Activated CD8-positive, alpha-beta T cell treated with anti-CD3 and anti-CD28 coated beads for 36 hours (primary cell): ENCODE measurements at regions of chr4 and their contacts with region 1.

Region 1: DNA sequence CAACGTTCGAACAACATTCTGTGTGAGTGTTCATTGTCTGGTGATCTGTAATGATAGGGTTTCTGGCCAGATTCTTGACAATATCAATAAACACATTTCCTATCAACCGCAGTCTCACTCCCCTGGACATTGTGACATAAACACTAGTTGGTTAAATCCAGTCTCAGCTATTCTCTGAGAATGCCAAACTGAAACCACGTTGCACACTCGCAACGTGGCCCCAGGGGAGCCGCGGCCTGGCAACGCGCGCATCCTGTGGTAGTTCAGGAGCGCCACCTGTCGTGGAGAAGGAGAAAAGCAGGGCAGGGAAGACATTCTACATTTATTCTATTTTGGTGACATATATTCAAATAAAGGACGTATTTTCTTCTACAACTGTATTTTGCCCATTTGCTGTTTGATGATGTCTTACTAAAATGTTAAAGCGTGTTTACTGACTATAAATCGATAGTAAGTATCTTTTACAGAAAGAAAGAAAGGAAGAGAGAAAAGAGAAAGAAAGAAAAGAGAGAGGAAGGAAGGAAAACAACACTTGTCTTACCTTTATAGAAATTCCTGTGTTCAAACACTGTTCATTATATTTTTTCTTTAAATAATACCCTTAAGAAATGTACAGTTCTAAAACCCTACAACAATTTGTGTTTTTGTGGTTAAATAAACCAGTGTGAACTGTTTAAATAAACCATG is 738.3 kb upstream of the FRG1 start:
- DNase-seq: peak; percentile 38
- ATAC-seq: peak; percentile 47
- H3K4me3 Mint-ChIP-seq: no peak overlapping the region
- H3K27ac Mint-ChIP-seq: no peak overlapping the region
- H3K4me1 Mint-ChIP-seq: peaks cover 4% of the 10 kb centered on the region
- H3K27me3 Mint-ChIP-seq: no peaks in the 10 kb centered on the region
- CTCF ChIP-seq: peak; percentile 82

Region 2: GRCh38 chr4:187606581-187606980 is 1595.7 kb before region 1 on chr4:
- CTCF ChIA-PET with region 1: no interaction called
- POLR2A ChIA-PET with region 1: no interaction called
- intact Hi-C with region 1: loop called (anchors 5 kb)
- DNase-seq: peak; percentile 15
- ATAC-seq: no peak
- H3K4me3 Mint-ChIP-seq: no peak overlapping the region
- H3K27ac Mint-ChIP-seq: no peak overlapping the region
- H3K4me1 Mint-ChIP-seq: no peaks in the 10 kb centered on the region
- H3K27me3 Mint-ChIP-seq: no peaks in the 10 kb centered on the region
- CTCF ChIP-seq: peak; percentile 79

Region 3: DNA sequence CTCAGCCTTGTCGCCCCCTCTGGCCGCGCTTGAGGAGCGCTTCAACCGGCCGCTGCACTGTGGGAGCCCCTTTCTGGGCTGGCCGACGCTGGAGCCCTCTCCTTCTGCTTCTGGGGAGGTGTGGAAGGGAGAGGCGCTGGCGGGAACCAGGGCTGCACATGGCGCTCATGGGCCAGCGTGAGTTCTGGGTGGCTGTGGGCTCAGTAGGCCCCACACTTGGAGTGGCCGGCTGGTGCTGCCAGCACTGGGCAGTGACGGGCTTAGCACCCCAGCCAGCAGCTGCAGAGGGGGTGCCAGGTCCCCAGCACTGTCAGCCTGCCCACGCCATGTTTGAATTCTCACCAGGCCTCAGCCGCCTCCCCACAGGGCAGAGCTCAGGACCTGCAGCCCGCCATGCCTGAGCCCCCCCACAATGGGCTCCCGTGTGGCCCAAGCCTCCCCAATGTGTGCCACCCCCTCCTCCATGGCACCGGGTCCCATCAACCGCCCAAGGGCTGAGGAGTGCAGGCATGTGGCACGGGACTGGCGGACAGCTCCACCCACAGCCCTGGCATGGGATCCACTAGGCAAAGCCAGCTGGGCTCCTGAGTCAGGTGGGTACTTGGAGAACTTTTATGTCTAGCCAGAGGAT is 447.8 kb before region 1 on chr4:
- CTCF ChIA-PET with region 1: no interaction called
- POLR2A ChIA-PET with region 1: no interaction called
- intact Hi-C with region 1: no loop called
- DNase-seq: no peak
- ATAC-seq: no peak
- H3K4me3 Mint-ChIP-seq: no peak overlapping the region
- H3K27ac Mint-ChIP-seq: no peak overlapping the region
- H3K4me1 Mint-ChIP-seq: no peaks in the 10 kb centered on the region
- H3K27me3 Mint-ChIP-seq: no peaks in the 10 kb centered on the region
- CTCF ChIP-seq: no peak

Region 4: GRCh38 chr4:189124149-189124758 is 78.1 kb before region 1 on chr4:
- CTCF ChIA-PET with region 1: no interaction called
- POLR2A ChIA-PET with region 1: no interaction called
- intact Hi-C with region 1: no loop called
- DNase-seq: peak; percentile 2
- ATAC-seq: no peak
- H3K4me3 Mint-ChIP-seq: no peak overlapping the region
- H3K27ac Mint-ChIP-seq: no peak overlapping the region
- H3K4me1 Mint-ChIP-seq: no peaks in the 10 kb centered on the region
- H3K27me3 Mint-ChIP-seq: no peaks in the 10 kb centered on the region
- CTCF ChIP-seq: no peak

Region 5: GRCh38 chr4:189215574-189215973 is 13.2 kb after region 1 on chr4:
- CTCF ChIA-PET with region 1: no interaction called
- POLR2A ChIA-PET with region 1: no interaction called
- intact Hi-C with region 1: no loop called
- DNase-seq: no peak
- ATAC-seq: no peak
- H3K4me3 Mint-ChIP-seq: no peak overlapping the region
- H3K27ac Mint-ChIP-seq: no peak overlapping the region
- H3K4me1 Mint-ChIP-seq: no peaks in the 10 kb centered on the region
- H3K27me3 Mint-ChIP-seq: no peaks in the 10 kb centered on the region
- CTCF ChIP-seq: no peak

Region 6: DNA sequence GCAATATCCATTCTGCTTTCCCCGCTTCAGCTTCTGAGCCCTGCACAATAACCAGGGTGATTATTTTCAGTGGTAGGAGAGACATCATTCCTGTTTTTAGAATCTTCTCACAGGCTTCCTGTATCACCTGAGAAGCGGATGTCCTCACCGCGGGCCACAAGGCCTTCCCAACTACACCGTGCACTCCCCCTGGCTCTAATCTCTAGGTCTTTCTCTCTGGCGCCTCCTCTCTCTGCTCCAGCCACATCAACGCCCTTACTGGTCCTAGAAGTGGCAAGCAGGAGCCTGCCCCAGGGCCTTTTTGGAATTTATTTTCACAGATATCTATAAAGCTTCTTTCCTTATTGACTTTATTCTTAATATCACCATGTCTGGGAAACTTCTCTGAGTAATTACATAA is 63.2 kb after region 1 on chr4:
- CTCF ChIA-PET with region 1: no interaction called
- POLR2A ChIA-PET with region 1: no interaction called
- intact Hi-C with region 1: no loop called
- DNase-seq: no peak
- ATAC-seq: no peak
- H3K4me3 Mint-ChIP-seq: no peak overlapping the region
- H3K27ac Mint-ChIP-seq: no peak overlapping the region
- H3K4me1 Mint-ChIP-seq: no peaks in the 10 kb centered on the region
- H3K27me3 Mint-ChIP-seq: no peaks in the 10 kb centered on the region
- CTCF ChIP-seq: no peak